ENCODE measurements at regions of chr5 and their contacts with region 1.

Region 1: DNA sequence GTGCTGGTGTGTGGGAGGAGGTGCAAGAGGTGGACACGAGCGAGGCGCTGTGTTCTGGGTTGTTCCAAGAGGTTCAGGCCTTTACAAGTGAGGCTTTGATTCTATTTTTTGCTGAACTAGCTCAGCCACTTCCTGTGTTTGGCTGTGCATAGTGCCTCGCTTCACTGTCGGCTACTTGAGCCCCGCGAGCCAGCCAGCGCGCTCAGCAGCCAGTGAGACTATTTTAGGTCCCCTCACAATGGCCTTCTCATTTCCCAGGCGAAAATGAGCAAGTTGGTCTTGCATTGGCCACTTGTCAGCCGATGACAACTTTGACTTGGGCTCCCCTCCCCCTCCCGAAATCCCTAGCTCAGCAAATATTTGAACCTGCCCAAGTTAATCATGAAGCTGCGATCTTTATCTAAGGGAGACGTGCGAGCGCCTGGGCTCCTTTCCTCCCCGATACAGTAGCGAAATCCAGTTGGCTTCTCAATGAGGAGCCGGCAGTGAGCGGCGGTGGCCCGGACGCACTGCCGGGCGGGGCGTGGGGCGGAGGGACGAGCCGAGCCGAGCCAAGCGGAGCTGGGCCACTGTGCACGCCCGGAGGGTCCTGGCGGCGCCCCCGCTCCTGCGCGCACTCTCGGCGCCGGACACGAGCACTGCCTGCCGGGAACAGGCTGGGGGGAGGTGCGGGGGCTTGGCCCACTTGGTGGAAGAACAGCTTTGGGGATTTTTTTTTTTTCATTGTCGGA is 72.6 kb downstream of the PIK3R1 start:
- DNase-seq: peak; percentile 73
- H3K4me3 ChIP-seq: peak overlapping the region; percentile 44 to 63 (median 60)
- H3K27ac ChIP-seq: peak overlapping the region; percentile 49
- H3K4me1 ChIP-seq: peaks cover 11% of the 10 kb centered on the region
- H3K27me3 ChIP-seq: no peaks in the 10 kb centered on the region
- CTCF ChIP-seq: no peak
- POLR2A ChIP-seq: peak; percentile 25

Region 2: GRCh38 chr5:68272289-68272688 is 15.9 kb before region 1 on chr5:
- CTCF ChIA-PET with region 1: interaction called, 12 read pairs
- POLR2A ChIA-PET with region 1: no interaction called
- dilution Hi-C with region 1: no loop called
- intact Hi-C with region 1: no loop called
- DNase-seq: peak; percentile 32
- H3K4me3 ChIP-seq: no peak overlapping the region
- H3K27ac ChIP-seq: no peak overlapping the region
- H3K4me1 ChIP-seq: no peaks in the 10 kb centered on the region
- H3K27me3 ChIP-seq: no peaks in the 10 kb centered on the region
- CTCF ChIP-seq: peak in 1 of 2 donors; percentile 15
- POLR2A ChIP-seq: no peak

Region 3: DNA sequence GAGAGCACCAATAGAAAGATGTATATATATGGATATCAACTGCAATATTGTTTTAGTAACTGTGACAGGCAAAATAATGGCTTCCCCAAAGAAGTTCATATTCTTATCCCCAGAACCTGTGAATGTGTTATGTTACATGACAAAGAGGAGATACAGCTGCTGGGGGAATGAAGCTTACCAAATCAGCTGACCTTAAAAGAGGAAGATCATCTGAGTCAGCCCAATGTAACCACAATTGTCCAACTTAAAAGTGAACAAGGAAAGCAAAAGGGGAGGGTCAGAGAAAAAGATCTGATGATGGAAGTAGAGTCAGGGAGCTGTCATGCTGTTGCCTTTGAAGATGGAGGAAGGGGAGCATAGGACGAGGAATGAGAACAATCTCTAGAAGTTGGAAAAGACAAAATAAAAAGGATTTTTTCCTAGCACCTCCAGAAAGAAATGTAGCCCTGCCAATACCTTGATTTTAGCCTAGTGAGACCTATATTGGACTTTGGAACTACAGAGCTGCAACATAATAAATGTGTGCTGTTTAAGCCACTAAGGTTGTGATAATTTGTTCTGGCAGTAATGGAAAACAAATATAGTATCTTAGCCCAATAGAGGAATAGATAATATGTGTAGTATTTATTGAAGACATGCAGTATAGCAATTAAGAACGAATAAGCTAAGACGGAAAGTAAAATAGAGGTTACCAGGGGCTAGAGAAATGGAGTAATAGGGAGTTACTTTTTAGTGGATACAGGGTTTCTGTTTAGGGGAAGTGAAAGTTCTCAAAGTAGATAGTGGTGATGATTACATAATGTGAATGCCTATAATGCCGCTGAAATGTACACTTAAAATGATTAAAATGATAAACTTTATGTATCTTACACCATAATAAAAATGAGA is 43.3 kb after region 1 on chr5:
- CTCF ChIA-PET with region 1: interaction called, 30 read pairs
- POLR2A ChIA-PET with region 1: no interaction called
- dilution Hi-C with region 1: no loop called
- intact Hi-C with region 1: loop called (anchors 2 kb)
- DNase-seq: no peak
- H3K4me3 ChIP-seq: no peak overlapping the region
- H3K27ac ChIP-seq: peak overlapping the region; percentile 56
- H3K4me1 ChIP-seq: peaks cover 41% of the 10 kb centered on the region
- H3K27me3 ChIP-seq: no peaks in the 10 kb centered on the region
- CTCF ChIP-seq: no peak
- POLR2A ChIP-seq: no peak

Region 4: GRCh38 chr5:68353605-68354004 is 65.5 kb after region 1 on chr5:
- CTCF ChIA-PET with region 1: interaction called, 9 read pairs
- POLR2A ChIA-PET with region 1: no interaction called
- dilution Hi-C with region 1: no loop called
- intact Hi-C with region 1: loop called (anchors 2 kb)
- DNase-seq: no peak
- H3K4me3 ChIP-seq: no peak overlapping the region
- H3K27ac ChIP-seq: no peak overlapping the region
- H3K4me1 ChIP-seq: peaks cover 21% of the 10 kb centered on the region
- H3K27me3 ChIP-seq: no peaks in the 10 kb centered on the region
- CTCF ChIP-seq: no peak
- POLR2A ChIP-seq: no peak

Region 5: DNA sequence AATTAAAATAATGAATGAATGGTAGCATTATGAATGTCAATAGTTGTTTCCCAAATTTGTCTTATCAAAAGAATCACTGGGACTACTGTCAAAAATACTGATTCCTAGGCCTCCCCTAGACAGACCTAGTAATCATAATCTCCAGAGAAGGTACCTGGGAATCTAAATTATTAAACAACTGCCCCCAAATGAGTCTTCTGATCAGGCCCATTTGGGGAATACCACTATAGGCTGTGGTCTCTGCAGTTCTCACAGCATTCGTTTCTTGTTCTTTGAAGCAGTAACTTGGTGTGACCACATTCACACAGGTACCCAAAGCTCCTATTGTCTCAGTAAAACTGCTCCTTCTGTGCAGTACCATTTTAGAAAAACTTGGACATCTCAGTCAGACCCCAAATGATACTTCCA is 158.3 kb after region 1 on chr5:
- CTCF ChIA-PET with region 1: interaction called, 21 read pairs
- POLR2A ChIA-PET with region 1: no interaction called
- dilution Hi-C with region 1: no loop called
- intact Hi-C with region 1: no loop called
- DNase-seq: no peak
- H3K4me3 ChIP-seq: no peak overlapping the region
- H3K27ac ChIP-seq: no peak overlapping the region
- H3K4me1 ChIP-seq: peaks cover 16% of the 10 kb centered on the region
- H3K27me3 ChIP-seq: no peaks in the 10 kb centered on the region
- CTCF ChIP-seq: no peak
- POLR2A ChIP-seq: no peak

Region 6: DNA sequence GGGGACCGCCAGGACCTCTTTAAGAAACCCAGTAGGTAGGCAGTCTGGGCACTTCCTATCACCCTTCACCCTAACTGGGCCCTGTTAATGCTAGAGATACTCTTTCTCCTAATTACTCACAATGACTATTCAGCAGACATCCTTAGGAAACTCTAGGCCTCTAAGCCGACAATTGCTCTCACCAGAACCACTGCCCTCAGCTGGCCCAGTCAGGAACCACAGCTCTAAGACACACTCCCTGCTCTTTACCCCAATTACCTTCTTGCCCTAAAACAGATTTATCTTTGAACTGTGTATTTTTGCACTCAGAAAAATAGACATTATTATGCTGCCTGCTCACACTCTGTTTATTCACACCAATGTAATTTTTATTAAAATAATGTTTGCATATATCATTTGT is 373.1 kb after region 1 on chr5:
- CTCF ChIA-PET with region 1: interaction called, 16 read pairs
- POLR2A ChIA-PET with region 1: no interaction called
- dilution Hi-C with region 1: no loop called
- intact Hi-C with region 1: no loop called
- DNase-seq: no peak
- H3K4me3 ChIP-seq: no peak overlapping the region
- H3K27ac ChIP-seq: no peak overlapping the region
- H3K4me1 ChIP-seq: no peaks in the 10 kb centered on the region
- H3K27me3 ChIP-seq: no peaks in the 10 kb centered on the region
- CTCF ChIP-seq: peak; percentile 8 to 24
- POLR2A ChIP-seq: no peak

Region 7: DNA sequence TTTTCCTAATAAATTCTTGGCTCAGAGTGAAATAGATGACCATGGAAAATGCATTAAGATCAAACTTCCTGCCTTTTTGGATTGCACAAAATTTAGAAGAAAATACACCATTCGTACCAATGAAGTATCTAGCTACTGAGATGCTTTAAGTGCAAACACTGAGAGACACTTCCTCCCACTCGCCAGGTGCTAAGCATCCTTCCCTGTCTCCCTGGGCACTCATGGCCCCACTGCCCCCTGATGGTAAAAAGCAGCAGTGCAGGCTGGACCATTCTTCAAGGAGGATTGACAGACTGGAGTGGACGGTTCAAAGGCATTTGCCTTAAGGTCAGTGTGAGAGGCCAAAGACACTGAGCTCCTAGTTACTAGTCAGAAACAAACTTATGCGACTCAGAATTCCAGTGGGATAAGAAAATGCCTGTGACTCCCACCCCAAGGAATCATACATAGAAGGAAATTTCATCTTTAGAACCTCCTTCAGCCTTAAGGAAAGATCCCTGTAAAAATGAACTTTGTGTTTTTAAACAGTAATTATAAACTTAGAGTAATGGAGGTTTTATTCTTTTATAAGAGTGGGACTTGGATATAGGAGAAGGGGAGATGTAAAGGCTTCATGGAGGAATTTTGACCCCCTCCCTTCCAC is 719.7 kb after region 1 on chr5:
- CTCF ChIA-PET with region 1: no interaction called
- POLR2A ChIA-PET with region 1: no interaction called
- dilution Hi-C with region 1: no loop called
- intact Hi-C with region 1: loop called (anchors 2 kb)
- DNase-seq: peak; percentile 36
- H3K4me3 ChIP-seq: no peak overlapping the region
- H3K27ac ChIP-seq: no peak overlapping the region
- H3K4me1 ChIP-seq: no peaks in the 10 kb centered on the region
- H3K27me3 ChIP-seq: peaks cover 9 to 14% of the 10 kb centered on the region in 2 experiments
- CTCF ChIP-seq: peak; percentile 70 to 73
- POLR2A ChIP-seq: no peak

Measured in endothelial cell of umbilical vein (primary cell).